BJ (cell line): ENCODE measurements at regions of chr11 and their contacts with region 1.

Region 1: GRCh38 chr11:62186195-62186594 is 3.8 kb upstream of the SCGB1D1 start:
- DNase-seq: no peak
- H3K4me3 ChIP-seq: no peak overlapping the region
- H3K27me3 ChIP-seq: peaks cover 5% of the 10 kb centered on the region
- CTCF ChIP-seq: no peak

Region 2: DNA sequence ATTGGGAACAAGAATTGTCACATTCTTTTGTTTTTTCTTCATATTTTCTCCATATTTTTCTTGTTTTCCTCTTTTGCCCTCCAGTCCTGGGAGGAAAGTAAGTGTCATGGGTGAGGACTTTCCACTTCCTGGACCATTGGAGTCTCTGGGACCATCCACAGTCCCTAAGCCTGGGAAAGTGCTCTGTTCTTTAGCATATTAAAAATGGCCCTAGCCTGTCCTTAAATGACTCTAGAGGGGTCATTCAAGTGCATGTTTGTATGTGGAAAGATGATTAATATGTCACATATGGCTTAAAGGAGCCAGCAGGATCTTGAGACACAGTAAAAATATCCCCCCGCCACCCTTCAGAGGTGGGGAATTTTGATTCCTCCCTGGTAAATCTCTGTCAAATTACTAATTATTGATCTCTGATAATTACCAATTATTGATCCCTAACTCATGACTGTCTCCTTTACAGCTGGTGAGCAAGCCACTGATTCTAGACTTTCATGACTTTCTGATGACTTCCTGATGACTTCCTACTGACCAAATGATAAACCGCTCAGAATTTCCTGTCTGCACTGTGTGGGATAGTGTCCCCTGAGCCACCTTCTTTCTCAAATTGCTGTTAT is 16.2 kb before region 1 on chr11:
- CTCF ChIA-PET with region 1: interaction called, 12 read pairs
- POLR2A ChIA-PET with region 1: interaction called, 3 read pairs
- DNase-seq: no peak
- H3K4me3 ChIP-seq: no peak overlapping the region
- H3K27me3 ChIP-seq: peaks cover 17% of the 10 kb centered on the region
- CTCF ChIP-seq: no peak